GM12878 (cell line): ENCODE measurements at regions of chr12 and their contacts with region 1.

Region 1: DNA sequence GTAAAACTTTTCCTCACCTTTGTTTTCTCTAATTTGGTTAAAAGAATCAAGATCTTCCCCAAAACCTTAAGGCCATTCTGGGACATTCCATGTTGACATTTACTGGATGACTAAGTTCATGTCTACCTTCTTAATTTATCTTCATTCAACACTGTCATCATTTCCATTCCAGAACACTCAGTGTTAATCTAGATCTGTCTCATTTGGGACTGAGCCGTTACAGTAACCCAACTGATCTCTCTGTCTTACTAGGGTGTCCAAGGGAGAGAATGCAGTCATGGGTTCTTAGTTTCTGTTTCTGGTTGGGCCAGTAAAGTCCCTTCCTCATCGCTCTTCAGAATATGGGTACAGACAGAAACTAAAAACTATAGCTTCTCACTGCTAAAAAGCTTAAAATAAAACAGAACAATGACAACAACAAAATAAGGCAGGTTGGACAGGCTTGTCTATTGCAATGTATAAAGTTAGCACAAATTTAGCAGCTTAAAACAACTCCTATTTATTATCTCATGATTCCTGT is 144.8 kb downstream of the ASCL1 start:
- DNase-seq: peak; percentile 72
- ATAC-seq: peak; percentile 91
- H3K4me3 ChIP-seq: no peak overlapping the region
- H3K27ac ChIP-seq: peak overlapping the region; percentile 82
- H3K4me1 ChIP-seq: peaks cover 29% of the 10 kb centered on the region
- H3K27me3 ChIP-seq: no peaks in the 10 kb centered on the region
- CTCF ChIP-seq: no peak
- EP300 ChIP-seq: peak; percentile 73 to 89; a peak in 3 of 4 replicates
- POLR2A ChIP-seq: no peak
- RAD21 ChIP-seq: peak; percentile 22; the same call in 1 of the 2 replicates

Region 2: GRCh38 chr12:102728506-102729242 is 373.6 kb before region 1 on chr12:
- CTCF ChIA-PET with region 1: no interaction called
- POLR2A ChIA-PET with region 1: no interaction called
- RAD21 ChIA-PET with region 1: no interaction called
- SMC1A ChIA-PET with region 1: no interaction called
- in situ Hi-C with region 1: no loop called
- intact Hi-C with region 1: no loop called
- DNase-seq: peak; percentile 77
- ATAC-seq: peak; percentile 82
- H3K4me3 ChIP-seq: 0 out of 2 replicates have a peak overlapping the region, but pooled peaks have one; percentile 13
- H3K27ac ChIP-seq: peak overlapping the region; percentile 81
- H3K4me1 ChIP-seq: peaks cover 21% of the 10 kb centered on the region
- H3K27me3 ChIP-seq: no peaks in the 10 kb centered on the region
- CTCF ChIP-seq: no peak
- EP300 ChIP-seq: no peak
- POLR2A ChIP-seq: no peak
- RAD21 ChIP-seq: no peak

Region 3: GRCh38 chr12:102958073-102958829 is 144.0 kb before region 1 on chr12:
- CTCF ChIA-PET with region 1: interaction called, 8 read pairs
- POLR2A ChIA-PET with region 1: interaction called, 16 read pairs
- RAD21 ChIA-PET with region 1: interaction called, 35 read pairs
- SMC1A ChIA-PET with region 1: interaction called, 39 read pairs
- in situ Hi-C with region 1: no loop called
- intact Hi-C with region 1: no loop called
- DNase-seq: no peak
- ATAC-seq: peak; percentile 72
- H3K4me3 ChIP-seq: peak overlapping the region; percentile 81
- H3K27ac ChIP-seq: no peak overlapping the region
- H3K4me1 ChIP-seq: peaks cover 8% of the 10 kb centered on the region
- H3K27me3 ChIP-seq: peaks cover 0 to 24% of the 10 kb centered on the region in 2 experiments; a peak in 2 of 4 replicates
- CTCF ChIP-seq: peak in 2 of 3 experiments; percentile 7 to 15; a peak in 2 of 6 replicates
- EP300 ChIP-seq: no peak; a peak in 1 of 4 replicates
- POLR2A ChIP-seq: no peak
- RAD21 ChIP-seq: no peak

Region 4: GRCh38 chr12:103036581-103037214 is 65.6 kb before region 1 on chr12:
- CTCF ChIA-PET with region 1: no interaction called
- POLR2A ChIA-PET with region 1: no interaction called
- RAD21 ChIA-PET with region 1: interaction called, 3 read pairs
- SMC1A ChIA-PET with region 1: interaction called, 5 read pairs
- in situ Hi-C with region 1: no loop called
- intact Hi-C with region 1: loop called (anchors 2 kb)
- DNase-seq: peak; percentile 31
- ATAC-seq: peak; percentile 85
- H3K4me3 ChIP-seq: no peak overlapping the region
- H3K27ac ChIP-seq: no peak overlapping the region
- H3K4me1 ChIP-seq: no peaks in the 10 kb centered on the region
- H3K27me3 ChIP-seq: no peaks in the 10 kb centered on the region
- CTCF ChIP-seq: no peak
- EP300 ChIP-seq: peak in 1 of 2 experiments; percentile 60; a peak in 1 of 4 replicates
- POLR2A ChIP-seq: no peak
- RAD21 ChIP-seq: no peak

Region 5: DNA sequence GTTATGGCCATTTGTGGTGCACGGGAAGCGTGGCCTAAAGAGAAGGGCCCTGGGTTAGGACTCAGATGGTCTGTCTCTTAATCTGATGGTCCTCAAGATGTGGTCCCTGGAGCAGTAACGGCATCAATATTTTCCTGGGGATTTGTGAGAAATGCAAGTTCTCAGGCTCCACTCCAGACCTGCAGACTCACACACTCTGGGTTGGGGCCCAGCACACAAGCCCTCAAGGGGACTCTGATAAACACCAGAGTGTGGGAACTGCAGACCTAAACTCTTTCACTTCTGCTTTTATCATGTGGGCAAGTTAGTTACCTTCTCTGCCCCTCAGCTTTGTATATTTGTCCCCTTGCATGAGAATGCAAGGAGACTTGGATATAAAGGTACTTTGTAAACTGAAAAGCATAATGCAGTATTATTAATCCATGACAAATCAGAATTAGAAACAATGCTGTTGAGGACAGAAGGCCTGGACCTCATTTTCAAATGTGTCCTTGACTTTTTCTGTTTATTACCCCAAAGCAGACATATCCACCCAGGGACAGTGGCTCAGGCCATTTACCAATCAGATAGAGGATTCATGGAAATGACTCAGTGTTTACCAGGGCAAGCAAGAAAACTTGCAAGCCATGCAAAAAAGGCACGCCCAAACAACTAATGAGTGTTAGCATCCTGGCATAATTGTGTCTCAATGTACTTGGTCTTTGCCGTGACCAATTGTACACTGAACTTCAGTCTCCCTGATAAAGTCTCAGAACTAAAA is 12.2 kb after region 1 on chr12:
- CTCF ChIA-PET with region 1: interaction called, 3 read pairs
- POLR2A ChIA-PET with region 1: interaction called, 5 read pairs
- RAD21 ChIA-PET with region 1: interaction called, 24 read pairs
- SMC1A ChIA-PET with region 1: interaction called, 28 read pairs
- in situ Hi-C with region 1: no loop called
- intact Hi-C with region 1: no loop called
- DNase-seq: peak; percentile 95
- ATAC-seq: peak; percentile 98
- H3K4me3 ChIP-seq: no peak overlapping the region
- H3K27ac ChIP-seq: peak overlapping the region; percentile 80
- H3K4me1 ChIP-seq: peaks cover 19% of the 10 kb centered on the region
- H3K27me3 ChIP-seq: no peaks in the 10 kb centered on the region
- CTCF ChIP-seq: no peak
- EP300 ChIP-seq: peak; percentile 73 to 94; a peak in 3 of 4 replicates
- POLR2A ChIP-seq: no peak
- RAD21 ChIP-seq: peak; percentile 47

Region 6: DNA sequence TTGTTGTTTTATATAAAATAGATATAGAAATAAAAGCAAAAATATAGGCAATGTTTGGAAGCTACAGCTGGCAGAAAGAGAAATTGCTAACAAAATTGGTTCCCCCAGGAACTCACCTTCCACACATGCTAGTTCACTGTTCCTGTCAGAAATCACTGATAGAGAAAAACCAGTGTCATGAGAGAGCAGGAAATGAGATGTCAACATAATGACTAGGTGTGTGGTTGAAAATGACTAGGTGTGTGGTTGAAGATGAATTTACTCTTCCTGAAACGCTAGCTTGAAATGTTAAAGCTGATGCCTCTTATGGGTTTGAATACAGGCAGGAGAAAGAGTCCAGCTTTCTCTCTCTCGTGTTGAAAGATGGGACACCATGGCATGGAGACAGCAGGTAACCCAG is 177.2 kb after region 1 on chr12:
- CTCF ChIA-PET with region 1: interaction called, 4 read pairs
- POLR2A ChIA-PET with region 1: interaction called, 3 read pairs
- RAD21 ChIA-PET with region 1: interaction called, 20 read pairs
- SMC1A ChIA-PET with region 1: interaction called, 4 read pairs
- in situ Hi-C with region 1: no loop called
- intact Hi-C with region 1: no loop called
- DNase-seq: peak; percentile 93
- ATAC-seq: peak; percentile 94
- H3K4me3 ChIP-seq: no peak overlapping the region
- H3K27ac ChIP-seq: peak overlapping the region; percentile 53; the same call in 1 of the 2 replicates
- H3K4me1 ChIP-seq: peaks cover 21% of the 10 kb centered on the region
- H3K27me3 ChIP-seq: no peaks in the 10 kb centered on the region
- CTCF ChIP-seq: no peak
- EP300 ChIP-seq: peak; percentile 83 to 93
- POLR2A ChIP-seq: no peak
- RAD21 ChIP-seq: 0 out of 2 replicates have a peak, but pooled peaks have one; percentile 8

Region 7: GRCh38 chr12:103334466-103334865 is 232.2 kb after region 1 on chr12:
- CTCF ChIA-PET with region 1: no interaction called
- POLR2A ChIA-PET with region 1: no interaction called
- RAD21 ChIA-PET with region 1: no interaction called
- SMC1A ChIA-PET with region 1: no interaction called
- in situ Hi-C with region 1: no loop called
- intact Hi-C with region 1: no loop called
- DNase-seq: no peak
- ATAC-seq: no peak
- H3K4me3 ChIP-seq: no peak overlapping the region
- H3K27ac ChIP-seq: no peak overlapping the region
- H3K4me1 ChIP-seq: no peaks in the 10 kb centered on the region
- H3K27me3 ChIP-seq: no peaks in the 10 kb centered on the region
- CTCF ChIP-seq: no peak
- EP300 ChIP-seq: no peak
- POLR2A ChIP-seq: no peak
- RAD21 ChIP-seq: no peak